Activated CD4-positive, alpha-beta memory T cell treated with anti-CD3 and anti-CD28 coated beads for 36 hours (primary cell): ENCODE measurements at regions of chr10 and their contacts with region 1.

Region 1: GRCh38 chr10:27742195-27743011 is 3.2 kb downstream of the MKX start:
- DNase-seq: peak; percentile 91
- H3K4me3 Mint-ChIP-seq: peak overlapping the region; percentile 74
- H3K27ac Mint-ChIP-seq: no peak overlapping the region
- H3K4me1 Mint-ChIP-seq: peaks cover 39% of the 10 kb centered on the region
- H3K27me3 Mint-ChIP-seq: peaks cover 49% of the 10 kb centered on the region

Region 2: DNA sequence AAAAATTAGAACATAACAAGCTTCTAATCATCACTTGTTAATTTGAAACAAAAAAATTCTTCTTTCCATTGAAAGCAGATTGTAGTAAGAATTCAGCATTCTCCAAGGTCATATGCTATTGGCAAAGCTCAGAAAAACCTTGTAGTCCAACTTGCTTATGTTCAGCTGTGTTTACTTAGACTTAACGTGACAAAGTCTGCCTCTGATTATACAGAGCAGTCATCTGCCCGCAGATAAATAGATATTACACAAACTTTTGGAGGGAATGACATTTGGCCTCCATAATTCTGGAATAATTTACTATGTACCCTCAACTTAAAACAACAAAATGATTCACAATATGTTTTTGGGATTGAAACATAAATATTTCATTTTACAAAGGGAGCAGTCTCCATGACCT is 42.6 kb before region 1 on chr10:
- CTCF ChIA-PET with region 1: no interaction called
- POLR2A ChIA-PET with region 1: no interaction called
- intact Hi-C with region 1: no loop called
- DNase-seq: no peak
- H3K4me3 Mint-ChIP-seq: no peak overlapping the region
- H3K27ac Mint-ChIP-seq: no peak overlapping the region
- H3K4me1 Mint-ChIP-seq: no peaks in the 10 kb centered on the region
- H3K27me3 Mint-ChIP-seq: no peaks in the 10 kb centered on the region

Region 3: DNA sequence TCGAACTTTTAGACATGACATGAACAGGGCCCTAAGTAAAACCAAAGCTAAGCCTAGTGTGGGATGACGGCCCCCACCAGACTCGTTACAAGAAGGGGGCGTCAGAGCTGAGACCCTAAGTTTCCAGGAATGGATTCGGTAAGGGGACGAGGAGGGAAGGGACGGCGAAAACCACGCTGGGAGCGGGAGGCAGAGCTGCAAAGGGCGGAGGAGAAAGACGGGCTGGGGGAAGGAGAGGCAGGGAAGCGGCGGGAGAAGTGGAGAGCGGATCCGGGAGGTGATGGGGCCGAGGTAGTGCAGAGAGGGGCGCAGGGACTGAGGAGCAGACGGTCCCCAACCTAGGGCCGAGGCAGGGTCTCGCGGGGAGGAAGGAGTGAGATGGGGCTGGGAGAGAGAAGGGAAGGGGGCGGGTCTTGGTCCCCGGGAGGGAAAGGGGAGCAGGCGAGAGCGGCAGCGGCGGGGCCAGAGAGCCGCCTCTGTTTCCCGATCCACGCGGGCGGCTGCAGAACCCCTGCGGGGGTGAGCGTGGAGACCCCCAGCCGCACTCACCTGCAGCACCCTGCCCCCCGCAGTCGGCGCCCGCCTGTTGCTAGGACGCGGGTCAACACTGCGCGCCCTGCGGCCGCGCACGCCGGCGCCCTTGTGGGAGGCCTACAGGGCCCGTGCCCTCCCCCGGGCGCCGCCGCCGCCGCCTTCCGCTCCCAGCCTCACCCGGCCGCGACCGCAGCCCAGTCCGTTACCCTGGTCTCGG is 256.0 kb after region 1 on chr10:
- CTCF ChIA-PET with region 1: no interaction called
- POLR2A ChIA-PET with region 1: no interaction called
- intact Hi-C with region 1: loop called (anchors 10 kb)
- DNase-seq: peak; percentile 29
- H3K4me3 Mint-ChIP-seq: peak overlapping the region; percentile 75
- H3K27ac Mint-ChIP-seq: no peak overlapping the region
- H3K4me1 Mint-ChIP-seq: peaks cover 11% of the 10 kb centered on the region
- H3K27me3 Mint-ChIP-seq: peaks cover 40% of the 10 kb centered on the region

Region 4: DNA sequence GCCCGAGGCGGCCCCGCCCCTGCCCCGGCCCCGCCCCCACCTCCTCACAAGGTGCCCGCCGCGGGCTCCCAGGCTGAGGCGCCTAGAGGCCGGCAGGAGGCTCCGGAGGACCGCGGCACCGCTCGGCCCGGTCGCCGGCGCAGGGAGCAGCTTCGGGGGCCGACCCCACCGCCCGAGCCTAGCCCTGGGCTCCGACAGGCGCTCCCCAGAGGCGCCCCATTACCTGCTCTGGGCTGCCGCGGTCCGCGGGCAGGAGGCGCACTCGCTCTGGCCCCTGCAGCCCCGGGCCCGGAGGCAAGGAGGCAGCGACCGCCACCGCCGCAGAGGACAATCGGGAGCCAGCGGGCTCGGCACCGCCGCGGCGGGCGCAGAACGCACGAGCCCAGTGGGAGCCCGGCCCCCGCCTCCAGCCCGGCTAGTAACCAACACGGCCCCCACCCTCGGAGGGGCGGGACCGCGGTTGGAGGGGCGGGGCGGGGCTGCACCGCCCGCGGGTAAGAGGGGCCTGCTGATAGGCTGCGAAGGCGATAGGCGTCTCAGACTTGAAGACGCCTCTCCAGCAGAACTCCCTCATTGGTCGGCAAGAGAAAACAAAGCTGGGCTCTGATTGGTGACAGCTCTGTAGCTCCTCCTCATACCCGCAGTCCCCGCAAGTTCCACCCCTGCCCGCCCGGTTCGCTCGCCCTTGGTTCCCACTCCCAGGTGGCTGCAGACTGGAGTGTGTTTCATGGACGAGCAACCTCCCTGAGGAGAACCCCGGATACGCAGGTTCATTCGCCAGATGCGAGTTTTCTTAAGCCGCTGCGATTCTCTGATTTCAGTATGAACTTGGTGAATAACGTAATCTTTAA is 560.5 kb after region 1 on chr10 and contains the start of gene MPP7:
- CTCF ChIA-PET with region 1: interaction called, 4 read pairs
- POLR2A ChIA-PET with region 1: no interaction called
- intact Hi-C with region 1: loop called (anchors 1 kb)
- DNase-seq: peak; percentile 97
- H3K4me3 Mint-ChIP-seq: peak within 1 kb of the TSS; percentile 90
- H3K27ac Mint-ChIP-seq: peak within 1 kb of the TSS; percentile 71
- H3K4me1 Mint-ChIP-seq: peaks cover 46% of the 10 kb centered on the region
- H3K27me3 Mint-ChIP-seq: no peaks in the 10 kb centered on the region
- total RNA-seq, gene MPP7: 11.6 to 12.8 TPM

Region 5: DNA sequence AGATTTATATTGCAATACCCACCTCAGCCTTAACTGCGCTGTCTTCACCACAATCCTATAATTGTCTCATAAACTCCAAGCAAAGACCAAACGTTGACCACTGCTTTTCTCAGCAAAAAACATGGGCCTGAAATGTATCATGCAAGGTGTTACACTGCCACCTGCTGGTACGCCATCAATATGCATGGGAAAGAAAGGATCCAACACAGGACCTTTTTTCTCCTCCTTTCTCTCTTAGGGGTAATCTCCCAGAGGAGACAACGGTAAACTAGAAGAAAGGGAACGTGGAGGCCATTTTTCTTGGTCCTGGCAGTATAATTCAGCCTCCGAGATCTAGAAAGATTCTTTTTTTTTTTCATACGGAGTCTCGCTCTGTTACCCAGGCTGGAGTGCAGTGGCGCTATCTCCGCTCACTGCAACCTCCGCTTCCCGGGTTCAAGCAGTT is 639.5 kb after region 1 on chr10:
- CTCF ChIA-PET with region 1: interaction called, 3 read pairs
- POLR2A ChIA-PET with region 1: no interaction called
- intact Hi-C with region 1: loop called (anchors 1 kb)
- DNase-seq: peak; percentile 89
- H3K4me3 Mint-ChIP-seq: no peak overlapping the region
- H3K27ac Mint-ChIP-seq: no peak overlapping the region
- H3K4me1 Mint-ChIP-seq: peaks cover 28% of the 10 kb centered on the region
- H3K27me3 Mint-ChIP-seq: no peaks in the 10 kb centered on the region